ENCODE measurements at regions of chr12 and their contacts with region 1.

Region 1: GRCh38 chr12:109775172-109775881 is 57.9 kb downstream of the TRPV4 start:
- DNase-seq: peak; percentile 77 to 82 (median 79)
- ATAC-seq: peak; percentile 79 to 82 (median 80)
- H3K4me3 ChIP-seq: no peak overlapping the region
- H3K27ac ChIP-seq: no peak overlapping the region
- H3K4me1 ChIP-seq: peaks cover 0 to 14% (median 4%) of the 10 kb centered on the region in 4 donors
- H3K27me3 ChIP-seq: no peaks in the 10 kb centered on the region
- CTCF ChIP-seq: peak; percentile 84 to 90 (median 88)
- POLR2A ChIP-seq: no peak

Region 2: GRCh38 chr12:109432841-109433304 is 342.5 kb before region 1 on chr12:
- intact Hi-C with region 1: loop called in 1 of 2 experiments (anchors 10 kb)
- DNase-seq: peak; percentile 89 to 90 (median 89)
- ATAC-seq: peak; percentile 89 to 91 (median 90)
- H3K4me3 ChIP-seq: no peak overlapping the region
- H3K27ac ChIP-seq: no peak overlapping the region
- H3K4me1 ChIP-seq: no peaks in the 10 kb centered on the region
- H3K27me3 ChIP-seq: no peaks in the 10 kb centered on the region
- CTCF ChIP-seq: peak; percentile 66 to 88 (median 85)
- POLR2A ChIP-seq: no peak

Region 3: GRCh38 chr12:109523071-109523470 is 252.3 kb before region 1 on chr12:
- intact Hi-C with region 1: loop called (anchors 5 to 10 kb)
- DNase-seq: no peak
- ATAC-seq: no peak
- H3K4me3 ChIP-seq: no peak overlapping the region
- H3K27ac ChIP-seq: no peak overlapping the region
- H3K4me1 ChIP-seq: no peaks in the 10 kb centered on the region
- H3K27me3 ChIP-seq: no peaks in the 10 kb centered on the region
- CTCF ChIP-seq: no peak
- POLR2A ChIP-seq: no peak

Region 4: DNA sequence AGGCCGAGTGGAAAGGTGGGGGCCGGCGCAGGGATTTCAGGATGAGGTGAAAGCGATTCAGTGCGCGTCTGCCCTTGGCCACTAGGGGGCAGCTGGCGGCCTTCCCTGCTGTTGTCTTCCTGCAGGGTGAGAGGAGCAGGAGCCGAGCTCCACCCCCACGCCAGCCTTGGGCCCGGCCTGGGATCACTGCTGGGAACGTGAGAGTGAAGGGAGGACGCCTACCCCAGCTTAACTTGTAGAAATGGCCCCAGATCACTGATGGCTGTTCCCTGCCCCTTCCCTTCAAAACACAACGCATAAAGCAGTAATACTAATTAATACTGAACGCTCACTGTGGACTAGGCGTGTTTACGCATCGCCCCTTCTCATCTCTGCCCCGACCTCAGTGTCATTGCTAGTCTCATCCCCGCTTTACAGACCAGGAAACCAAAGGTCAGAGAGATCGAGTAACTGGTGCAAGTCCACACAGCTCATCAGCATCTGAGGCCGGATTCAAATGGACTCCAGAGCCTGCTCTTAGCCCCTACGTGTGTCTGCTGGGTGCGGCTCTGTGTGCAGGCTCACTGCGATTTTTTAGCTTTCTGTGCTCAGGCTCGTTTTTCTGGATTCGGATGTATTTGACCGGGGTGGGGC is 177.4 kb before region 1 on chr12:
- intact Hi-C with region 1: loop called (anchors 5 kb)
- DNase-seq: peak; percentile 90 to 91 (median 91)
- ATAC-seq: peak; percentile 94 to 98 (median 96)
- H3K4me3 ChIP-seq: no peak overlapping the region
- H3K27ac ChIP-seq: no peak overlapping the region
- H3K4me1 ChIP-seq: peaks cover 0 to 14% (median 2%) of the 10 kb centered on the region in 4 donors
- H3K27me3 ChIP-seq: no peaks in the 10 kb centered on the region
- CTCF ChIP-seq: peak; percentile 95 to 98 (median 96)
- POLR2A ChIP-seq: no peak

Measured in right lobe of liver (tissue), 6 donors.